Vagina (tissue), 2 donors: ENCODE measurements at regions of chr3 and their contacts with region 1.

Region 1: GRCh38 chr3:30107531-30107930 is 498.9 kb upstream of the TGFBR2 start:
- DNase-seq: no peak
- H3K4me3 ChIP-seq: no peak overlapping the region
- H3K27ac ChIP-seq: no peak overlapping the region
- H3K4me1 ChIP-seq: no peaks in the 10 kb centered on the region
- H3K27me3 ChIP-seq: no peaks in the 10 kb centered on the region
- CTCF ChIP-seq: no peak
- POLR2A ChIP-seq: no peak

Region 2: GRCh38 chr3:30042274-30042859 is 65.2 kb before region 1 on chr3:
- intact Hi-C with region 1: loop called (anchors 10 kb)
- DNase-seq: no peak
- H3K4me3 ChIP-seq: no peak overlapping the region
- H3K27ac ChIP-seq: no peak overlapping the region
- H3K4me1 ChIP-seq: no peaks in the 10 kb centered on the region
- H3K27me3 ChIP-seq: no peaks in the 10 kb centered on the region
- CTCF ChIP-seq: peak; percentile 68 to 80 (median 79)
- POLR2A ChIP-seq: no peak

Region 3: DNA sequence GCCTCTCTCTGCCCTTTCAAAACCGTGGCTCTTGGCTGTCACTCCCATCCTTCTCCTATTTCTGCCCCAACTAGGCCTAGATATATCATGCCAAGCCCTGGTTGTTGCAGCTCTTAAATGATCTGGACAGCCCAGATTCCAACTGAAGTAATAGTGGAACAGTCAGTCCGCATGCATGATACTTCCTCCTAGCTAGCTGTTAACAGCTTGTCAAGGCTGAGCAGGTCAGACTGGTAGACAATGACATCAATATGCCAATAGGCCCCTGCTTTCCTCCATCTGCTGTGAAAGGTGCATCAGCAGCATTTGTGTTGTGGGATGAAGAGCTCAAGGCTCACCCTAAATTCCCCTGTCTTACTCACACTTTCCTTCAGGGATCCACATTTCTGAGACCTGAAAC is 28.8 kb before region 1 on chr3:
- intact Hi-C with region 1: no loop called
- DNase-seq: no peak
- H3K4me3 ChIP-seq: no peak overlapping the region
- H3K27ac ChIP-seq: no peak overlapping the region
- H3K4me1 ChIP-seq: no peaks in the 10 kb centered on the region
- H3K27me3 ChIP-seq: no peaks in the 10 kb centered on the region
- CTCF ChIP-seq: no peak
- POLR2A ChIP-seq: no peak

Region 4: DNA sequence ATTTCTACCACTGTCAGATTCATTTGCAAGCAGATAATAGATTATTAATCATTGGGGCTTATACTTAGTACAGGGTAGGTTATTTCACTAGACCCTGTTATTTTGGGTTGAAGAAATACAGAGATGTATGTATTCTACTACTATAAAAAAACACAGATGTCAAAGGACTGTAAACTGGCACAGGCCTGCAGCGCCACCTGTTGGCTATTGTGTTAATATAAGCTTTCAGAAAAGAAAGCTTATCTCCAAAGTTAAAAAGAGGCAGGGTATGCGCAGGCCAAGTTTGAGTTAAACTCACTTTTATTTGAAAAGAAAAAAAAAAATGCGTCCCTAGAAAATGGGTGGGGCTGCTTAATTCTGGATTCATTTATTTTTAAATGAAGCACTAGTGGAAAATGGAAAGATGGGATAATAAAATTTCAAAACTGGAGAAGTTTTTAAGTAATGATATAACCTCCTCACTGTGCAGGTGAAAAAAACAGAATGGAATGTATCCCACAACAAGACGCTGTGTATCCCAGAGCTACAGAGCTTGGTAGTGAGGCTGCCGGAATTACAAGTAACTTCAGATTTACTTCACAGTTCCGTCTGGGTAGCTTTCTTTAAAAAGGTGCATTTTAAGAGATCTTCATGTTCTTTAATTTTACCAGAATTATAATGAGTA is 91.7 kb after region 1 on chr3:
- intact Hi-C with region 1: loop called (anchors 5 kb)
- DNase-seq: no peak
- H3K4me3 ChIP-seq: no peak overlapping the region
- H3K27ac ChIP-seq: peak overlapping the region; percentile 24
- H3K4me1 ChIP-seq: no peaks in the 10 kb centered on the region
- H3K27me3 ChIP-seq: no peaks in the 10 kb centered on the region
- CTCF ChIP-seq: peak; percentile 56 to 79 (median 61)
- POLR2A ChIP-seq: no peak